ENCODE measurements at regions of chr12 and their contacts with region 1.

Region 1: DNA sequence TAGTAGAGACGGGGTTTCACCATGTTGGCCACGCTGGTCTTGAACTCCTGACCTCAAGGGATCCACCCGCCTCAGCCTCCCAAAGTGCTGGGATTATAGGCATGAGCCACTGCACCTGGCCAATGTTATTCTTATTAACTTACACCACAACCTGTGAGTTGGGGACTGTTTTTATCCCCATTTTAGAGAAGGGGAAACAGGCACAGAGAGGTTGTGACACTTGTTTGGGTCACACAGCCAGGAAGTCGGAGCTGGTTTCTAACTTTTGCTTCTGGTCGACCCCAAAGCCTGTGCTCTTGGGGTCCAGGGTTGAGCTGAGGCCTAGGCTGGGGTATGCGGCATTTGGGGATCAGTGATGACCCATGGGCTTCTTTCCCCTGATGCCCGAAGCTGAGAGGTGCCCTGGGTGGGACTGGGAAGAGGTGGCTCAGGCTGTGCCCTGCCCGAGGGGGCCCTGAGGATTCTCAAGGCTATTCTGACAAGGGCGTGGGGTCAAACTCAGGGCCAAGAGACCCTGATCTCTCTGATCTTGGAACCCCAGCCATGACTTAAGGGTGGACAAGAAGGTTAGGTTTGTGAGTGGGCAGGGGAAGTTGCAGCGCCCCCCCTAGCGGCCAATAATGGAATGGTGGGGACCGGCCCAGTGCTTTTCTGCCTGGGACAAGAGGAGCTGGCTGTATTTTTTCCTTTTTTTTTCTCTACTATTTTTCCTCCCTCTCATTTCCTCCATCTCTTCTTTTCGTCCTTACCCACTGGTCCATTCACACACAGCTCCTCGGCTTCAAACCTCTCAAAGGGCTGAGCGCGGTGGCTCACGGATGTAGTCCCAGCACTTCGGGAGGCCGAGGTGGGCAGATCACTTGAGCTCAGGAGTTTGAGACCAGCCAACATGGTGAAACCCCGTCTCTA is 3.0 kb downstream of the SDSL start:
- DNase-seq: peak; percentile 48
- ATAC-seq: peak; percentile 77
- H3K4me3 ChIP-seq: no peak overlapping the region
- H3K27ac ChIP-seq: no peak overlapping the region
- H3K4me1 ChIP-seq: peaks cover 2% of the 10 kb centered on the region; the same call in 1 of the 2 replicates
- H3K27me3 ChIP-seq: no peaks in the 10 kb centered on the region
- CTCF ChIP-seq: peak; percentile 84
- POLR2A ChIP-seq: no peak
- RAD21 ChIP-seq: peak; percentile 72

Region 2: GRCh38 chr12:113310489-113310888 is 114.7 kb before region 1 on chr12:
- CTCF ChIA-PET with region 1: interaction called, 4 read pairs
- POLR2A ChIA-PET with region 1: no interaction called
- dilution Hi-C with region 1: no loop called
- in situ Hi-C with region 1: no loop called
- intact Hi-C with region 1: loop called (anchors 1 kb)
- DNase-seq: no peak
- ATAC-seq: no peak
- H3K4me3 ChIP-seq: no peak overlapping the region
- H3K27ac ChIP-seq: no peak overlapping the region
- H3K4me1 ChIP-seq: peaks cover 2% of the 10 kb centered on the region; the same call in 1 of the 2 replicates
- H3K27me3 ChIP-seq: no peaks in the 10 kb centered on the region
- CTCF ChIP-seq: 0 out of 2 replicates have a peak, but pooled peaks have one; percentile 1
- POLR2A ChIP-seq: no peak
- RAD21 ChIP-seq: no peak